ENCODE measurements at regions of chr2 and their contacts with region 1.

Region 1: DNA sequence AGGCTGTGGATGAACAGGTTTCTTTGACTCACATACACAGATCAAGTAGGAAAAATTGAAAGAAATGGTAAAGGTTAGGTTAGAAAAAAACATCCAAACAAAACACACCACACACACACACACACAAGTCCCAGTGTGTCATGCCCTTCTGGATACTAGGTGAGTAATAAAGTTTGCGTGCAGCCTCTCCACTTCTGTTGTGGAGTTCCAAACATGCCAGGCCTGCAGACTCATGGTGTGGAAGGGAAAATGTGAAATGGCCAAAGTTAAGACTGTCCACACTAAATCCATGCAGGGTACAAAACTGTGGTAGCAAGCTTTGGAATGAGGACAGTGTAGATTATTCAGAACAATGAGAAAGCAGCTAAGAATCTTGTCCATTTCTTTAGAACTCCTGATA is 114.6 kb downstream of the IKZF2 start:
- DNase-seq: no peak
- ATAC-seq: peak; percentile 2; the same call in 1 of the 3 replicates
- H3K4me3 ChIP-seq: no peak overlapping the region
- H3K27ac ChIP-seq: peak overlapping the region; percentile 17; the same call in 1 of the 2 replicates
- H3K4me1 ChIP-seq: peaks cover 26% of the 10 kb centered on the region
- H3K27me3 ChIP-seq: no peaks in the 10 kb centered on the region
- CTCF ChIP-seq: no peak
- EP300 ChIP-seq: no peak
- POLR2A ChIP-seq: no peak
- RAD21 ChIP-seq: no peak

Region 2: DNA sequence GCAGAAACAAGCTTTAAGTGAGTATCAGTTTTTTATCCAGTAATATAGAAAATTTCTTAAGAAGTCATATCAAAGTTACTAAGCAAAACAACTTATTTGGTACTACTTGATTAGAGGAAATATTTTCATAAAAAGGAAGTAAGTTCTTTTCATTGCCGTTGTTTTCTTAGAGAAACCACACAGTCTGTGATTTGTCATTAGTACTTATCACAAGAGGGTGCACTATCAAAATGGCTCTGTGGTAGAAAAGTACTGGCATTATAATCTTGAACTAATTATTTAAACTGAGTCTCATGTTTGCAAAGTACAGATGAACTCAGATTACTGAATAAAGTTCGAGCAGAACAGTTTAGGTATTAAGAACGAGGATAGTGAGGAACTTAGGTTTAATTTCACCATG is 21.1 kb after region 1 on chr2:
- CTCF ChIA-PET with region 1: no interaction called
- POLR2A ChIA-PET with region 1: no interaction called
- RAD21 ChIA-PET with region 1: interaction called, 4 read pairs
- SMC1A ChIA-PET with region 1: interaction called, 11 read pairs
- in situ Hi-C with region 1: no loop called
- intact Hi-C with region 1: no loop called
- DNase-seq: no peak
- ATAC-seq: peak; percentile 41
- H3K4me3 ChIP-seq: no peak overlapping the region
- H3K27ac ChIP-seq: no peak overlapping the region
- H3K4me1 ChIP-seq: no peaks in the 10 kb centered on the region
- H3K27me3 ChIP-seq: no peaks in the 10 kb centered on the region
- CTCF ChIP-seq: no peak
- EP300 ChIP-seq: no peak
- POLR2A ChIP-seq: no peak
- RAD21 ChIP-seq: no peak